OCI-LY7 (cell line): ENCODE measurements at regions of chr17 and their contacts with region 1.

Region 1: DNA sequence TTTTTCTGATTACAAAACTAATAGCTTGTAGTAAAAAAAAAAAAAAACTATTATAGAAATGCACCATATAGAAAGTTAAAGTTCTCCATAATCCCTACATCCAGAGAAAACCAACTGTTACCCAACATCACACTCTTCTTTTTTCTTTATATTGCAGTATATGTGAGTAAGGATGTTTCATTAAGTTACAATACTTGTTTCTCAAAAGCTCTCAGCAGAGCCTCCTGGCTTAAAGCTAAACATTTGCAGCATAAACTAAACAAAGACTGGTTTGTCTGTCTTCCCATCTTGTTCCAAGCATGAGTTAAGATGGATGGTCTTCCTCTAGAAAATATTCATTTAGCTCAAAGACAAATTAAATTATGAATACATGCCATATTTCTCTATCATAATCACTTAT is 25.2 kb downstream of the GRB2 start:
- DNase-seq: no peak
- H3K4me3 ChIP-seq: no peak overlapping the region
- H3K27ac ChIP-seq: no peak overlapping the region
- H3K4me1 ChIP-seq: peaks cover 69% of the 10 kb centered on the region
- CTCF ChIP-seq: no peak

Region 2: GRCh38 chr17:74999523-74999922 is 380.8 kb before region 1 on chr17:
- CTCF ChIA-PET with region 1: no interaction called
- POLR2A ChIA-PET with region 1: interaction called, 10 read pairs
- intact Hi-C with region 1: no loop called
- DNase-seq: no peak
- H3K4me3 ChIP-seq: no peak overlapping the region
- H3K27ac ChIP-seq: no peak overlapping the region
- H3K4me1 ChIP-seq: no peaks in the 10 kb centered on the region
- CTCF ChIP-seq: no peak